ENCODE measurements at regions of chr2 and their contacts with region 1.

Region 1: DNA sequence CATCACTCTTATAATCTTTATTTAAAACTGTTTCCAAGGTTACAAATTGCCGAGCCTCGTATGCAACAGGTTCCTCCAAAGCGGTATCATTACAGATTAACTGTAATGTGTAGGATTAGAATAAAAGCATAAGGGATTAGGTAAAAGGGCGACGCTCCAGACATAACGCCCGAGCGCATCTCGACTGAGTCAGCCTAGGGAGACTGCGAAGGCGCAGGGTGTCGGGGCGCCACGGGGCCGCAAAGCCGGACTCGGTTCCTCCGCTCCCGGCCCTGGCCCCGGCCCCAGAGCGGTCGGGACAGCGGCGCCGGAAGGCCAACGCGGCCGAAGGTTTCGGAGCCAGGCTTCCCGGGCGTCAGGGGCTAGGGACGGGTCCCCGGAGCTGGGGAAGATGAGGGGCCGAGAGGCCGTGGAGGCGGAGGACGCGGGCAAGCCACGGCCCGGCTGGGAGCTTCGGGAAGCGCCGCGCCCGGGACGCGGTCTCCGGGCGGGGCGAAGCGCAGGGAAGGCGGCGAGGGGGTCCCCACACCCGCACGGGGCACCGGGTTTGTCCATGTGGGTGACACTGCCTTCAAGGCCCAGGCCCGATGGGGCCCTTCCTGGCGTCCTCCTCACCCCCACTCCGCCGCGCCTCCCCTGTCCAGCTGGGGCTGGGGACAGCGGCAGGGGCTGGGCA is 12.9 kb upstream of the SIX3 start:
- DNase-seq: no peak
- H3K4me3 Mint-ChIP-seq: no peak overlapping the region
- H3K27ac Mint-ChIP-seq: no peak overlapping the region
- H3K4me1 Mint-ChIP-seq: peaks cover 5% of the 10 kb centered on the region
- H3K27me3 Mint-ChIP-seq: peaks cover 76% of the 10 kb centered on the region

Region 2: DNA sequence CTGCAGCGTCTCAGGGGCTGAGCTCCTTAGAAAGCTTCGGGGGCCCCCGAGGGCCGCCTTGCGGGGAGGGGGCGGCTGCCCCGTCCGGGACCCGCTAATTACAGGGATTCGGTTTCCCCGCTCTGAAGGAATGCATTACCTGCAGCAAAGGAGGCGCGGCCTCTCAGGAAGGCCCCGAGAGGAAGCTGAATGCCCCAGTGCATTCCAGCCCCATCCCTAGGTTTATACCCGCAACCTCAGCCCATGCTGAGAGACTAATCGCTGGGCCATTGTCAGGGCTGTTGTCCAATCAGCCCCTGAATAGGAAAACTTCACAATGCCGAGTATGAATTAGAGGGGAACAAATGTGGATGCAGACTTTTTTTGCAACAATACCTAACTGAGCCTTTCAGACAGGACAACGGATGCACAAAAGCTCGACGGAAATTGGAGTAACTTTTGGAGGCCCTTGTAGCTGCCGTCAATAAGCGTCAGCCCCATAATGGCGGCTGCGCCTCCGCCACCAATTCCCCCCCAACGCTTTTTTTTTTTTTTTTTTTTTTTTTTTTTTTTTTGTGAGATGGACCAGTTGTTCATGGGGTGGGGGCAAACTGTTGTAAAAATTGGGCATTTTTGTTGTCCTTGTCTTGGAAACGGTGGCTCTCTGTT is 125.7 kb before region 1 on chr2:
- intact Hi-C with region 1: loop called (anchors 2 kb)
- DNase-seq: no peak
- H3K4me3 Mint-ChIP-seq: no peak overlapping the region
- H3K27ac Mint-ChIP-seq: no peak overlapping the region
- H3K4me1 Mint-ChIP-seq: no peaks in the 10 kb centered on the region
- H3K27me3 Mint-ChIP-seq: peaks cover 87% of the 10 kb centered on the region

Region 3: GRCh38 chr2:44941551-44942234 is 13.1 kb after region 1 on chr2 and contains the start of gene SIX3:
- intact Hi-C with region 1: loop called (anchors 1 kb)
- DNase-seq: peak; percentile 82
- H3K4me3 Mint-ChIP-seq: peak within 1 kb of the TSS; percentile 81
- H3K27ac Mint-ChIP-seq: peak within 1 kb of the TSS; percentile 67
- H3K4me1 Mint-ChIP-seq: peaks cover 14% of the 10 kb centered on the region
- H3K27me3 Mint-ChIP-seq: peaks cover 79% of the 10 kb centered on the region
- total RNA-seq, gene SIX3: not detected in 2 replicates

Measured in activated CD4-positive, alpha-beta T cell treated with anti-CD3 and anti-CD28 coated beads, Interleukin-2, amount 10 ng/mL, durations not matched to agents 24 days and 14 days (primary cell).